WTC11 (cell line): ENCODE measurements at regions of chr2 and their contacts with region 1.

Region 1: DNA sequence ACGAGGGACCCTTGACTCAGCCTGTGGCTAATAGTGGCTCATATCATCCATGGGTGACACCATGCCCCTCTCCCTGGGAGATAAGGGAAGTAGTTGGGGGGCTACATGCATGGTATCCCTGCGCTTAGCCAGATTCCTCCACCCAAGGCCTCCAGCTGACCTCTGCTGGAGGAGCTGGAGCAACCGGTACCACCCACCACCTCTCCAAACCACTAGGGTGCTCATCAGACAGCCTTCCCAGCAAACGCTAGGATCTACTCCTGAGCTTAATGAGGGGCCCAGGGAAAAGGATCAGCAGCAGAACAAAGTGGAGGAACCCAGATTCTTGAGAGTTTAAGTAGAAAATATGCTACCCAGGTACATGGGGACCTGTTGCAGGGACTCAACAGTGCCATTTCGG is 75.9 kb upstream of the CAPN13 start:
- DNase-seq: no peak
- ATAC-seq: peak; percentile 38
- H3K4me3 Mint-ChIP-seq: no peak overlapping the region
- H3K27ac Mint-ChIP-seq: no peak overlapping the region
- H3K4me1 Mint-ChIP-seq: peaks cover 40% of the 10 kb centered on the region
- H3K27me3 Mint-ChIP-seq: peaks cover 8% of the 10 kb centered on the region
- CTCF ChIP-seq: no peak

Region 2: DNA sequence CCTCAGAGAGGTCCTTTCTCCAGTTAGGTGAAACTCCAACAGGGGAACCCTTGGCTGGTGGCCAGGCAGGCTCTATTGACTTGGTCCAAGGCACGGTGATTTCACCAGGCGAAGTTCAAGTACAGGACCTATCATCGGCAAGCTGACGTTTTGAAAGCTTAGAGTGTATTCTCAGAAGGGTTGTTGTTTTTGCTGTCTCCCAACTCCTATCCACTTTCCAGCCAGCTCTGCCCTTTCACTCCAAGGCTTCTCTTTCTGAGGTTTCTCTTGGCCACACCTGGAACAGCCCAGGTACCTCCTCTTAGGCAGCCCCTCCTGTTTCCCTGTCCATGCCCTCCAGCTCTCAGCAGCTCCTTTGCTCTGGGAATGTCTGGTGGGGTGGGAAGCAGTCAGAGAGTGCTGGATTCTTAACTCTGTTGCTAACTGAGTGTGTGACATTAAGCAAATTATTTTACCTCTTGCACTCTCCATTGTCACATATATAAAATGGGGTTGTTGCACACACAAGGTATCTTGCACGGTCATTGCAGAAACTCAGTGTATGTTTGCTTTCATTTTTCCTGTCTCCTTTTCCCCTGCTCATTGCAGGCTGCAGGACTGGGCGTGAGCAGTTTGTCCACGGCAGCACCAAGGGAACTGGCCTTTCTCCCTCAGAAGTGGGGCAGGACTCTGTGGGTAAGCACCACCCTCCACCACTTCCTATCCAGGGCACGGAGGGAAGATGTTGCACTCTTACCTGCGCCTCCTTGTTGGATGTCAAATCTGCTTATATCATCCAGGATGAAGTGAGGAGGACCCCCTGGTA is 106.2 kb before region 1 on chr2:
- CTCF ChIA-PET with region 1: no interaction called
- POLR2A ChIA-PET with region 1: no interaction called
- DNase-seq: no peak
- ATAC-seq: no peak
- H3K4me3 Mint-ChIP-seq: no peak overlapping the region
- H3K27ac Mint-ChIP-seq: no peak overlapping the region
- H3K4me1 Mint-ChIP-seq: no peaks in the 10 kb centered on the region
- H3K27me3 Mint-ChIP-seq: no peaks in the 10 kb centered on the region
- CTCF ChIP-seq: no peak

Region 3: GRCh38 chr2:30807249-30807648 is 75.9 kb before region 1 on chr2 and contains the start of gene CAPN13:
- CTCF ChIA-PET with region 1: no interaction called
- POLR2A ChIA-PET with region 1: no interaction called
- DNase-seq: peak; percentile 49
- ATAC-seq: peak; percentile 99
- H3K4me3 Mint-ChIP-seq: no peak within 1 kb of the TSS
- H3K27ac Mint-ChIP-seq: peak within 1 kb of the TSS; percentile 14; the same call in 1 of the 2 replicates
- H3K4me1 Mint-ChIP-seq: peaks cover 11% of the 10 kb centered on the region
- H3K27me3 Mint-ChIP-seq: no peaks in the 10 kb centered on the region; the same call in 1 of the 2 replicates
- CTCF ChIP-seq: no peak
- total RNA-seq, gene CAPN13: 1.7 to 2.4 TPM (median 2.0 TPM) in 3 replicates

Region 4: GRCh38 chr2:30828586-30828985 is 54.6 kb before region 1 on chr2:
- CTCF ChIA-PET with region 1: no interaction called
- POLR2A ChIA-PET with region 1: no interaction called
- DNase-seq: no peak
- ATAC-seq: no peak
- H3K4me3 Mint-ChIP-seq: no peak overlapping the region
- H3K27ac Mint-ChIP-seq: no peak overlapping the region
- H3K4me1 Mint-ChIP-seq: no peaks in the 10 kb centered on the region
- H3K27me3 Mint-ChIP-seq: no peaks in the 10 kb centered on the region
- CTCF ChIP-seq: no peak

Region 5: DNA sequence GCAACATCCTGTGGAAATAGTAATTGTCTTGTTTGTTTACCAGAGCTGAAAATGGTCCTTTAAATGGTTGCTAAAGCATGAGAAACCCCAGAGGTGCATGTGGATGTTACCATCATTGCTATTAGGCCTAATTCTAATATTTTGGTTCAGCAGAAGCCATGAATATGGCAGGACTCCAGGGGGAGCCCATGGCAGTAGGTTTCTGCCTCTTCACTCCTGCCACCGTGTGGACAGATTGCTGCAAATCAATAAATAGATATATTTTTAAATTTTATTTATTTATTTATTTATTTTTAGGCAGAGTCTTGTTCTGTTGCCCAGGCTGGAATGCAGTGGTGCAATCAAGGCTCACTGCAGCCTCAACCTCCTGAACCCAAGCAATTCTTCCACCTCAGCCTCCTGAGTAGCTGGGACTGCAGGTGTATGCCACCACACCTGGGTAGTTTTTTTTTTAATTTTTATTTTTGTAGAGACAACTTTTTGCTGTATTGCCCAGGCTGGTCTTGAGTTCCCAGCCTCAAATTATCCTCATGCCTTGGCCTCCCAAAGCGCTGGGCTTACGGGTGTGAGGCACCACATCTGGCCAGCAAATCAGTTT is 21.0 kb before region 1 on chr2:
- CTCF ChIA-PET with region 1: interaction called, 18 read pairs
- POLR2A ChIA-PET with region 1: no interaction called
- DNase-seq: peak; percentile 65
- ATAC-seq: peak; percentile 76
- H3K4me3 Mint-ChIP-seq: no peak overlapping the region
- H3K27ac Mint-ChIP-seq: no peak overlapping the region
- H3K4me1 Mint-ChIP-seq: no peaks in the 10 kb centered on the region
- H3K27me3 Mint-ChIP-seq: no peaks in the 10 kb centered on the region
- CTCF ChIP-seq: peak; percentile 60; the same call in 1 of the 2 replicates

Region 6: GRCh38 chr2:30915486-30915885 is 32.3 kb after region 1 on chr2:
- CTCF ChIA-PET with region 1: interaction called, 10 read pairs
- POLR2A ChIA-PET with region 1: no interaction called
- DNase-seq: peak; percentile 70
- ATAC-seq: peak; percentile 97
- H3K4me3 Mint-ChIP-seq: no peak overlapping the region
- H3K27ac Mint-ChIP-seq: no peak overlapping the region
- H3K4me1 Mint-ChIP-seq: peaks cover 6% of the 10 kb centered on the region
- H3K27me3 Mint-ChIP-seq: no peaks in the 10 kb centered on the region
- CTCF ChIP-seq: peak; percentile 20; the same call in 1 of the 2 replicates